GM10248 (cell line): ENCODE measurements at regions of chr2 and their contacts with region 1.

Region 1: GRCh38 chr2:196239622-196240587 is 68.5 kb upstream of the STK17B start:
- DNase-seq: peak; percentile 61
- CTCF ChIP-seq: no peak

Region 2: DNA sequence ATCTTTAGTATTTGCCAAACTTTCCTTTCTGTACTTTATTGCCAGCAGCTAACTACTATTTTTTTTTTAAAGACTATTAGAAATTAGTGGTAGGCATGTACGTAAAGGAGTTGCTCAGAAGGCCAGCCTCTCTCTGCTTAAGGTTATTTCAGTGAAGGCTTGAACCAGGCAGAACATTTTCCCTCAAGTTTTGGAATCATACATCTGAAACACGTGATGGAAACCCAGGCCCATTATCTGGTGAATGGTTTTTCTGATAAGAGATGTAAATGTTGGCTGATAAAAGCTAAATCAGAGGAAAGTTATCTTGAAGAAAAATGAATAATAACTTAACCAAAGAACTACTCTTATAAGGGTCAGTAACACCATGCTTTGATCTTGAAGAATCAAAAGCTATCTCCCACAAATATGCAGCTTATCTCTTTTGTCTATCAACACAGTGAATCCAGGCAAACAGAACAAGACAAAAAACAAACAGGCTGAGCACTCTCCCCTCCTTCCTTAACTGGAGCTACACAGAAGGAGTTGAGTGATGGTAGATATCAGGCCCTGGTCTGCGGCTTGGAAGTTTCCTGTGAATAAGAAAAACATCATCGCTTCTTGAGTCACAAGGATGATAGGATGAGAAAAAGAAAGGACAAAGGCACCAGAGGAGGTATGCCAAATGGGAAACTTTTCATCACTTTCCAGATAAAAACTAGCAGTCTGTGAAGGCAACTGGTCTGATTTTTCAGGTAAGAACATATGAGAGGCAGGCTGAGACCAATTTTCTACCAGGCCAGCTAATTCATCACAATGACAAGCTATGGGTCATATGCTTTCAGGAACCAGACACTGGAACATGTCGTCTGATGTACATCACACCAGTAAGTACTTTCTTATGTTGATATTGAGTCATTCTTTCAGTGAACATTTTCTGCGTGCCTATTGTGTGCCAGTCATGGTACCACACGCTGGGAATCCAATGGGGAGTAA is 19.9 kb after region 1 on chr2:
- CTCF ChIA-PET with region 1: interaction called, 10 read pairs
- POLR2A ChIA-PET with region 1: no interaction called
- DNase-seq: no peak
- CTCF ChIP-seq: no peak

Region 3: DNA sequence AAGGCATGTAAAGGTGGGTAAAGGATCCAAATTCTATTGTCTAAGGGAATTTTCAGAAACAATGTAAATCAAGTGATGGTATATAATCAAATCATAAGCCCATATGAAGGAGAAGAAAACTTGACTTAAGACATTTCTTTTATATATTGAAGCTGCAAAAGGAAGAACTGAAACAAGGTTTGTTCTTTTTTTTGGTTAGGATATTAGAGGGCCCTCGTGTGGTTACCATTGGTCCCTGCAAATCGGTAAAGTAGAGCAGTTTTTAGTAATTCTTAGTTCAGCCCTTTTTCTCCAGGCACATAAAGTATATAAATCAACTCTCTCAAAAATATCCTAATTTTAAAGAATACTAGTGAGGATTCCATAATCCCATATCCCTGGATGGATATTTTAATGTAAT is 37.1 kb after region 1 on chr2:
- CTCF ChIA-PET with region 1: interaction called, 23 read pairs
- POLR2A ChIA-PET with region 1: no interaction called
- DNase-seq: peak; percentile 64
- CTCF ChIP-seq: peak; percentile 75